ENCODE measurements at regions of chr4 and their contacts with region 1.

Region 1: DNA sequence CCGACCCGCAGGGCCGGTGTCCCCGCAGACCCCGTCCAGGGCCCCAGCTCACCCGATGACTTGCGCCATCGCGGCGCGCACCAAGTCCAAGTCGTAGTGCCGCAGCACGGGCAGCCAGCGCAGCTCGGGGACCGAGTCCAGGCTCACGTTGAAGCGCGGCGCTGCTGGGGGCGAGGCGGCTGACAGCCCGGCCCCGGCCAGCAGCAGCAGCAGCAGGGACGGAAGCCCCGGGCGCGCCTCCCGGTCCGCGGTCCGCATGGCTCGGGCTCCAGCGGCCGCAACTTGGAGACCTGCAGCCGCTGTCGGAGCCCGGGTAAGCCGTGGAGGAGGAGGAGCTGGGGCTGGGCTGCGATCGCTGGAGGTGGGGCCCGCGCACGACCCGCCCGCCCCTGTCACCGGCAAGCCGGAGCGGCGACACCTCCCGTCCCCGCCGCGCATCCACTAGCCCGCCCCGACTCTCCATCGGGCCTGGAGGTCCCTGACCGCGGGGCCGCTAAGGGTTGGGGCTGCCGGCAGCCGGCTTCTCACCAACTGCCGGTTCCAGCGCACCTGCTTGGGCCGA is at the start of gene NAAA:
- DNase-seq: peak; percentile 68
- H3K27ac ChIP-seq: peak within 1 kb of the TSS; percentile 75
- CTCF ChIP-seq: peak; percentile 62

Region 2: DNA sequence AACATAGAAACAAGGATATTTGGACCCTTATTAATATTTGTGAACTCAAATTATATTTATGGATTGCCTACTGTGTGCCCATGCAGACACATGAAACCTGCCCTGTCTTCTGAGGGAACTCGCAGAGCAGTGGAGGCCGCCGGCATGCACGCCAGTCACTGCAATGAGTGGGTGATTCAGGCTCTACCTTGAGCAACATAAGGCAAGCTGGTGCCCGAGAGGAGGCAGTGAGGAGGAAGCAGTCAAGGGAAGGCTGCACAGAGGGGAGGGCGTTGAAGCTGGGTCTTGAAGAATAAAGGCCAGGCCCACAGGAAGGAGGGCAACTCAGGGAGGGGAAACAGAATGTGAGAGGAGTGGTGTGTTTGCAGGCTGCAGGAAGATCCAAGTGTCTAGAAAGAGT is 91.3 kb before region 1 on chr4:
- CTCF ChIA-PET with region 1: no interaction called
- POLR2A ChIA-PET with region 1: interaction called, 12 read pairs
- DNase-seq: no peak
- H3K27ac ChIP-seq: no peak overlapping the region
- CTCF ChIP-seq: no peak

Region 3: GRCh38 chr4:75916091-75916661 is 24.6 kb before region 1 on chr4:
- CTCF ChIA-PET with region 1: interaction called, 11 read pairs
- POLR2A ChIA-PET with region 1: interaction called, 3 read pairs
- DNase-seq: peak; percentile 52
- H3K27ac ChIP-seq: no peak overlapping the region
- CTCF ChIP-seq: peak; percentile 90